ENCODE measurements at regions of chr1 and their contacts with region 1.

Region 1: GRCh38 chr1:110619412-110620249 is 13.5 kb upstream of the KCNA2 start:
- DNase-seq: peak; percentile 82 to 95 (median 89)
- ATAC-seq: peak; percentile 84
- H3K4me3 ChIP-seq: peak overlapping the region; percentile 69
- H3K4me3 Mint-ChIP-seq: peak overlapping the region; percentile 86
- H3K27ac ChIP-seq: peak overlapping the region; percentile 46 to 69
- H3K27ac Mint-ChIP-seq: peak overlapping the region; percentile 87
- H3K4me1 ChIP-seq: peaks cover 34% of the 10 kb centered on the region
- H3K4me1 Mint-ChIP-seq: peaks cover 46% of the 10 kb centered on the region
- H3K27me3 ChIP-seq: no peaks in the 10 kb centered on the region
- H3K27me3 Mint-ChIP-seq: no peaks in the 10 kb centered on the region
- CTCF ChIP-seq: peak; percentile 96

Region 2: DNA sequence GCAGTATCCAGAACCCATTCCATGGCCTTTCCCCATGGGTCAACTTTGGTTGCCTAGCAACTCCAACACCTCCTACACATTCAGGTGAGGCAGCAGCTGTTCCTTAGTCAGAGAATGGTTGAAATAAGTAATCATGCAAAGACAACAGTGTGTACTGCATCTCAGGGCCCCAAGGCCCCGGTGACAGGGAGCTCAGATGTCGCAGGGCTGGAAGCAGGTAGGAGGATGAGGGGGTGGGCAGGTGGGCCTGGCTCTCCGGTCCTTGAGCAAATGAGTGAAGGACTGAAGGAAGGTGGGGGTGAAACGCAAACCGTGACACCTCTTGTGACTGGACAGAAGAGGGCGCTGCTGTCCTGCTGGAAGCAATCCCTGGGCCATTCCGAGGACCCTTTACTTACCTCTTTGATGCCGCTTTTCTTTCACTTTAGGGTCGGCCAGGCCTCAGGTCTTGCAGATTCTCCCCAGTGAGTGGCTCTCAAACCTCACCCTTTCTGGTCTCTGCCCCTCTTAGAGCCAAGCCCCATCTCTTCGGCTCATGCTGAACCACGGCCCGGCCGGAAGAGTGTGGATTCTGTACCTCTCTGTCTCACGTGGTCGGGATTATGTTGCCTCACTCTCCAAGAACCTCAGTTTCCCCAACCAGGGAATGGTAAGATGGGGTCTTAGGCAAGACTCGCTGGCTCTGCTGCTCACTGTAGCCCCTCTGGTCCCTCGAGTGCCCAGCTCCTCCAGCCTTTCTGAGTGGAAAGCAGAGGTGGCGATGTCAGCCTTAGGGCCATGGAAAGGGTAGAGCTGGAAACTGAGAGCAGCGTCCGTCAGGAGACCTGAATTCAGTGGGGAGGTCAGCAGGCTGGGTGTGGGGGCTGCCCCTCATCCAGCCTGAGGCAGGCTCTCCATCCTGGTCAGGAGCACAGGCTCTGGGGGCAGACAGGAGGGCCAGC is 95.0 kb before region 1 on chr1:
- CTCF ChIA-PET with region 1: no interaction called
- POLR2A ChIA-PET with region 1: no interaction called
- intact Hi-C with region 1: loop called (anchors 1 to 10 kb)
- DNase-seq: peak; percentile 11 to 76 (median 30)
- ATAC-seq: peak; percentile 66
- H3K4me3 ChIP-seq: no peak overlapping the region
- H3K4me3 Mint-ChIP-seq: no peak overlapping the region
- H3K27ac ChIP-seq: no peak overlapping the region
- H3K27ac Mint-ChIP-seq: no peak overlapping the region
- H3K4me1 ChIP-seq: peaks cover 8% of the 10 kb centered on the region
- H3K4me1 Mint-ChIP-seq: no peaks in the 10 kb centered on the region
- H3K27me3 ChIP-seq: peaks cover 0 to 10% of the 10 kb centered on the region in 2 experiments
- H3K27me3 Mint-ChIP-seq: peaks cover 38% of the 10 kb centered on the region
- CTCF ChIP-seq: peak; percentile 58

Region 3: GRCh38 chr1:110581682-110582145 is 37.9 kb before region 1 on chr1:
- CTCF ChIA-PET with region 1: no interaction called
- POLR2A ChIA-PET with region 1: no interaction called
- intact Hi-C with region 1: no loop called
- DNase-seq: no peak
- ATAC-seq: no peak
- H3K4me3 ChIP-seq: no peak overlapping the region
- H3K4me3 Mint-ChIP-seq: no peak overlapping the region
- H3K27ac ChIP-seq: no peak overlapping the region
- H3K27ac Mint-ChIP-seq: no peak overlapping the region
- H3K4me1 ChIP-seq: no peaks in the 10 kb centered on the region
- H3K4me1 Mint-ChIP-seq: no peaks in the 10 kb centered on the region
- H3K27me3 ChIP-seq: peaks cover 10 to 12% of the 10 kb centered on the region in 2 experiments
- H3K27me3 Mint-ChIP-seq: peaks cover 18% of the 10 kb centered on the region
- CTCF ChIP-seq: no peak

Region 4: GRCh38 chr1:110630839-110631663 is 11.4 kb after region 1 on chr1:
- CTCF ChIA-PET with region 1: interaction called, 22 read pairs
- POLR2A ChIA-PET with region 1: interaction called, 18 read pairs
- intact Hi-C with region 1: loop called in 1 of 2 experiments (anchors 1 kb)
- DNase-seq: peak; percentile 77 to 93 (median 83)
- ATAC-seq: peak; percentile 72
- H3K4me3 ChIP-seq: peak overlapping the region; percentile 43
- H3K4me3 Mint-ChIP-seq: no peak overlapping the region
- H3K27ac ChIP-seq: peak overlapping the region; percentile 66 to 75
- H3K27ac Mint-ChIP-seq: no peak overlapping the region
- H3K4me1 ChIP-seq: peaks cover 87% of the 10 kb centered on the region
- H3K4me1 Mint-ChIP-seq: peaks cover 47% of the 10 kb centered on the region
- H3K27me3 ChIP-seq: no peaks in the 10 kb centered on the region
- H3K27me3 Mint-ChIP-seq: no peaks in the 10 kb centered on the region
- CTCF ChIP-seq: peak; percentile 87

Region 5: DNA sequence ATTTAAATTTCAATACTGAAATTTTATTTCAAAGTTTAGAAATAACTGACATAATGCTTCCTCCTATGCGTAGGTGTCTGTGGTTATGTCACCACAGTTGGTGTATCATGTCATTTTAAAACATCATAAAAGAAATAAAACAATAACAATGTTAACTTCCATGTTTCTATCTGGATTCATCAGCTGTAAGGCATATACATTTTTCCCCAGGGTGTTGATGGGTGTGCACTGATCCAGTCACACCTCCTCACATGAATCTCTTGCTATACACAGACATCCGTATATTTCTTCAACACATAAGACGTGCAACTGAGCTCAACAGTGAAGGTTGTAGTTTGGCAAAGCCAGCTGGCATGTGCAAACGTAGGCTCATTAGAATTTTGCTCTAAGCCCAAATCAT is 48.9 kb after region 1 on chr1:
- CTCF ChIA-PET with region 1: interaction called, 25 read pairs
- POLR2A ChIA-PET with region 1: interaction called, 73 read pairs
- intact Hi-C with region 1: loop called in 1 of 2 experiments (anchors 2 kb)
- DNase-seq: peak in 4 of 14 experiments; percentile 5 to 68 (median 54)
- ATAC-seq: peak; percentile 23
- H3K4me3 ChIP-seq: peak overlapping the region; percentile 99
- H3K4me3 Mint-ChIP-seq: peak overlapping the region; percentile 80
- H3K27ac ChIP-seq: peak overlapping the region; percentile 33 to 39
- H3K27ac Mint-ChIP-seq: no peak overlapping the region
- H3K4me1 ChIP-seq: peaks cover 26% of the 10 kb centered on the region
- H3K4me1 Mint-ChIP-seq: peaks cover 52% of the 10 kb centered on the region
- H3K27me3 ChIP-seq: no peaks in the 10 kb centered on the region
- H3K27me3 Mint-ChIP-seq: no peaks in the 10 kb centered on the region
- CTCF ChIP-seq: no peak

Region 6: GRCh38 chr1:110766025-110766647 is 146.5 kb after region 1 on chr1:
- CTCF ChIA-PET with region 1: interaction called, 102 read pairs
- POLR2A ChIA-PET with region 1: interaction called, 59 read pairs
- intact Hi-C with region 1: loop called (anchors 1 kb)
- DNase-seq: peak; percentile 22 to 87 (median 44)
- ATAC-seq: peak; percentile 82
- H3K4me3 ChIP-seq: no peak overlapping the region
- H3K4me3 Mint-ChIP-seq: no peak overlapping the region
- H3K27ac ChIP-seq: no peak overlapping the region
- H3K27ac Mint-ChIP-seq: no peak overlapping the region
- H3K4me1 ChIP-seq: peaks cover 4% of the 10 kb centered on the region
- H3K4me1 Mint-ChIP-seq: peaks cover 5% of the 10 kb centered on the region
- H3K27me3 ChIP-seq: no peaks in the 10 kb centered on the region
- H3K27me3 Mint-ChIP-seq: peaks cover 5% of the 10 kb centered on the region
- CTCF ChIP-seq: peak; percentile 93

Region 7: DNA sequence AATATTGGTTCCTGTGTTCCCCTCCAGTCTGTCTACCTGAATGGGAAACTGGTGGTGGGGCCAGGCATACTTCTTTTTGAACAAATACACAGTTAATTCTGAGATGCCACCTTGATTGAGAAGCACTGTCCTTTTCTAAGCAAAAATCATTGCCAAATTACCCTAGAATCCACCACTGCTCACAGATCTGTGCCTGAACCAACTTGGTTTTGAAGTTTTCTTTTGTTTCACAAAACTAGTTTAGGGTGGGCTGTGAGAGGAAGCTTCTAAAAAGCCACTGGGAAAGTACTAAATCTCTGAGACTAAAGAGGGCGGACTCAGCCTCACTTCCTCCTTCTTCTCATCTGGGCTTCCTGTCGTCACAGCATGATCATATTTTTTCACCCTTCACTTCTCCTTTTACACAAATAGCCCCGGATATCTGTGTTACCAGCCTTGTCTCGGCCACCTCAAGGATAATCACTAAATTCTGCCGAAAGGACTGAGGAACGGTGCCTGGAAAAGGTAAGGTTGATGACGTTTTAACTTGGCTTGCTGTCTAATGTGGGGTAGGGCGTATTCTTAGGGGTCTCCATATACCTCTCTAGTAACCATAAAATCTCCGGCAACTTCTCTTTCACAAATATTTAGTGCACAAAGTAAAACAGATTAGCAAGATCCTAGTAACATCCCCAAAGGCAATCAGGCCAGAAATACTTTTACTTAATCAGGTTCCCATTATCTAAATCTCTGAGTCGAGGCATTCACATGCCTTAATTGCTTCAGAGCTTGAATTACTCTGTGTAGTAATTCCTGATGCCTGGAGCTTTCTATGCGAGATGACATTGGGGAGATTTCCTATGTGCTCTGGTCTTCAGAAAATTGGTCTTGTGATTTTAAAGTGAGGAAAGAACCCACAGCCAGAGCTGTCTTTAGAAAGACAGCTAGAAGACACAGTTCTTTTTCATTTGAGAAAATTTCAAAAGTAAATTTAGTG is 253.4 kb after region 1 on chr1 and contains the start of gene CD53:
- CTCF ChIA-PET with region 1: no interaction called
- POLR2A ChIA-PET with region 1: interaction called, 14 read pairs
- intact Hi-C with region 1: no loop called
- DNase-seq: peak in 12 of 14 experiments; percentile 24 to 90 (median 50)
- ATAC-seq: peak; percentile 69
- H3K4me3 ChIP-seq: peak within 1 kb of the TSS; percentile 66
- H3K4me3 Mint-ChIP-seq: peak within 1 kb of the TSS; percentile 91
- H3K27ac ChIP-seq: peak within 1 kb of the TSS; percentile 92 to 93
- H3K27ac Mint-ChIP-seq: peak within 1 kb of the TSS; percentile 92
- H3K4me1 ChIP-seq: peaks cover 32% of the 10 kb centered on the region
- H3K4me1 Mint-ChIP-seq: peaks cover 65% of the 10 kb centered on the region
- H3K27me3 ChIP-seq: no peaks in the 10 kb centered on the region
- H3K27me3 Mint-ChIP-seq: no peaks in the 10 kb centered on the region
- CTCF ChIP-seq: no peak
- total RNA-seq, gene CD53: 169 to 176 TPM

Region 8: DNA sequence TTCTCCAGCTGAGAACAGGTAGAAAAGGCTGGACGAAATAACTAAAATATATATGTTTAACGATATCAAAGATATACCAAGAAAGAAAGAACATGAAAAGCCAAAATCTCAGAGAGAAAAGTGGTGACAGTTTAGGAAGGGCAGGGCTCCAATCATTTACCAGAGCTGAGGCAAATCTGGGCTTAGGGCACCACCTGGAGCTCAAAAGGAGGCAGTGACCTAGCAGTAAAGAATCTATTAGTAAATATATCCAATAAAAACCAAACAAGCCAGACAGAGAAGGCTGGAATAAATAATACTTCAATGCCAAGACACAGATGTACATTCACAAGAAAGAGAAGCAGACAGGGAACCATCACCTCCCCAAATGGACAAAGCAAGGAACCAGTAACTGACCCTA is 714.5 kb after region 1 on chr1:
- CTCF ChIA-PET with region 1: no interaction called
- POLR2A ChIA-PET with region 1: no interaction called
- intact Hi-C with region 1: loop called (anchors 10 kb)
- DNase-seq: peak; percentile 37 to 85 (median 52)
- ATAC-seq: peak; percentile 95
- H3K4me3 ChIP-seq: no peak overlapping the region
- H3K4me3 Mint-ChIP-seq: no peak overlapping the region
- H3K27ac ChIP-seq: no peak overlapping the region
- H3K27ac Mint-ChIP-seq: no peak overlapping the region
- H3K4me1 ChIP-seq: peaks cover 8% of the 10 kb centered on the region
- H3K4me1 Mint-ChIP-seq: peaks cover 6% of the 10 kb centered on the region
- H3K27me3 ChIP-seq: no peaks in the 10 kb centered on the region
- H3K27me3 Mint-ChIP-seq: no peaks in the 10 kb centered on the region
- CTCF ChIP-seq: peak; percentile 81

Region 9: DNA sequence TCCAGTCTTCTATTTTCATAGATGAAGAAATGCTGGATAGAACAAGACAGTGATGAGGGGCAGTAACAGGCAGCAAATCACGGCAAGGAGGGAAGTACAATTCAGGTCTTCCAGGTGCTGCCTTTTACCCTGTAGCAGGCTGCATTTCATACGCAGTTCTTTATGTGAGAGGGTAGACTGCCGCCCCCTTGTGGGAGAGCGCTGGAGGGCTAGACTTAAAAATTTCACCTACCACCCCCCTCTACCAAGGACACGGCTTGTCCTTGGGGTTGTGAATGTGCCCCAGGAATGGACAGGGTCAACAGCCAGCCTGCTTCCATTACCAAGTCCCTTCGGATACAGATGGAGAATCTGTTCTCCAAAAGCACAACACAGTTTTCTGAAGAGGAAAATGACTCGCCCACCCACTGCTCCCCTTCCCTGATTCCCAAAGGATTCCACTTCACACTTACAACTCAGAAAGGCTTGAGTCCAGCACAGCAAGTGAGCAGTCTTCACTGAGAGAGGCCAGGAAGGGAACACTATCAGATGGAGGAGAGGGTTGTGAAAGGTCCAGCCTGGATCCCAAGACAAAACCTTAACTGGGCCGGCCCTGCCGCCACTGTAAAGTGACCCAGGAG is 822.1 kb after region 1 on chr1:
- CTCF ChIA-PET with region 1: no interaction called
- POLR2A ChIA-PET with region 1: no interaction called
- intact Hi-C with region 1: no loop called
- DNase-seq: peak; percentile 58 to 83 (median 70)
- ATAC-seq: peak; percentile 98
- H3K4me3 ChIP-seq: no peak overlapping the region
- H3K4me3 Mint-ChIP-seq: no peak overlapping the region
- H3K27ac ChIP-seq: no peak overlapping the region
- H3K27ac Mint-ChIP-seq: peak overlapping the region; percentile 84
- H3K4me1 ChIP-seq: peaks cover 14% of the 10 kb centered on the region
- H3K4me1 Mint-ChIP-seq: peaks cover 54% of the 10 kb centered on the region
- H3K27me3 ChIP-seq: no peaks in the 10 kb centered on the region
- H3K27me3 Mint-ChIP-seq: no peaks in the 10 kb centered on the region
- CTCF ChIP-seq: peak; percentile 80

Measured in CD4-positive, alpha-beta T cell (primary cell).